ENCODE measurements at regions of chr12 and their contacts with region 1.

Region 1: GRCh38 chr12:6778574-6779550 is 6.5 kb downstream of the LAG3 start:
- DNase-seq: peak; percentile 94
- H3K4me3 ChIP-seq: peak overlapping the region; percentile 65
- H3K27ac ChIP-seq: no peak overlapping the region
- H3K4me1 ChIP-seq: peaks cover 43% of the 10 kb centered on the region
- CTCF ChIP-seq: peak; percentile 98

Region 2: DNA sequence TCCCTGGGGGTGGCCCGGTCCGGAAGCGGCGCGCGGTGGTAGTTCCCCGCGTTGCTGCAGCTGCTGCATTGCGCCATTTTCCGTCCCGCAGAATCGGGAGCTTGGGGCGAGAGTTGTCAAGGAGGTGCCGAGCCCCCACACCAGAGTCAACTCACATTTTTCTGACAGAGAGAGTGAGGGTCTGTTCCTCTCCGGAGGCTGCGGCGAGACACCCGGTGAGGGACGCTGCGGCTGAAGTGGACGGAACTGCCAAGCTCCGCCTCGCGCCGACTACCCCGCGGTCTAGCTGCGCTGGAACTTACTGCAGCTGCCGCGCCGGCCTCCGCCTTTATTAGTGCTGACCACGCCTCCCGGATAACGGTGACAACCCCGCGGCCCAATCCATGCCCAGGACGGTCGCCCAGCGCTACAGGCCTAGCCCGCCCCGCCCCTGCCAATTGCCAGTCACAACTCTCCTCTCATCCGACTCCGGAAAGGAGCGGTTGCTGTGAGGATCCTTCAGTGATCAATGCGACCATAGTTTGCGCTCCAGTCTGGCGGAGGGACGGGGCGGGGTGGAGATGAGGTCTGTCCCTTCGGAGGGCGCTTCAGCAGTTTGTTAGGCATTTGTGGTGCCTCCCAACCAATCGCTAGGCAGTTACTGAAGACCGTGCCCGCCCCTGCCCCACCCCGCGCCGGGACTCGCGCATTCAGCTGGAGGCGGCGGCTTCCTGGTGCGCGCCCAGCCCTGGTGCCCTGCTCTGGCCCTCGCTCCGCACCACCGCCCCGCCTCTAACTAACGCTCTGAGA is 308.3 kb before region 1 on chr12 and contains the start of gene VAMP1:
- CTCF ChIA-PET with region 1: no interaction called
- POLR2A ChIA-PET with region 1: no interaction called
- intact Hi-C with region 1: no loop called
- DNase-seq: peak; percentile 96
- H3K4me3 ChIP-seq: peak within 1 kb of the TSS; percentile 86
- H3K27ac ChIP-seq: peak within 1 kb of the TSS; percentile 62
- H3K4me1 ChIP-seq: peaks cover 32% of the 10 kb centered on the region
- CTCF ChIP-seq: no peak; the same call in 1 of the 2 replicates
- total RNA-seq, gene VAMP1: 82.7 and 86.0 TPM in 2 replicates

Region 3: GRCh38 chr12:6554168-6555017 is 224.5 kb before region 1 on chr12:
- CTCF ChIA-PET with region 1: no interaction called
- POLR2A ChIA-PET with region 1: no interaction called
- intact Hi-C with region 1: loop called (anchors 2 kb)
- DNase-seq: peak; percentile 91
- H3K4me3 ChIP-seq: peak overlapping the region; percentile 92
- H3K27ac ChIP-seq: peak overlapping the region; percentile 49
- H3K4me1 ChIP-seq: peaks cover 40% of the 10 kb centered on the region
- CTCF ChIP-seq: peak; percentile 81

Region 4: DNA sequence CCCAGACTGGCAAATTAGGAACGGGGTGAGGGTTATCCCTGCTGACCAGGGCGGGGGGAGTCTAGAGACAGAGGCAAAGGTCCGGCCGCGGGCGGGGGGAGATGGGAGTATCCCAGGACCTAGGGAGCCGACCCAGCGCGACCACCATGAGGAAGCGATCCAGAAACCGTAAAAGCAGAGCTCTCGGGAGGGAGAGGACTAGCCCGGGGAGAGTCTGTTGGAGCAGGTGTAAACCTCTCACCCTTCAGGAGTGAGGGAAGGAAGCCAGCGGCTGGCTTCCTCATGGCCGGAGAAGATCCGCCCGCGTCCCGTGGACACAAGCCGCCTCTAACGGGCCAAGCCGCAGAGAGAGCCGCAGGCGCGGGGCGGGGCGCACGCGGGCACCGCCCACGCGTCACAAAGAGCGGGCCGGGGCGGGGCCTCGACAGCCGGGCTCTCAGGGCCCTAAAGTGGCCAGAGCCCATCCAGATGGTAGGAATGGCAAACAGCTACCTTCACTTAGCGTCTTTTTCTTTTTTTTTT is 131.7 kb before region 1 on chr12 and contains the start of gene ACRBP:
- CTCF ChIA-PET with region 1: no interaction called
- POLR2A ChIA-PET with region 1: no interaction called
- intact Hi-C with region 1: no loop called
- DNase-seq: peak; percentile 80
- H3K4me3 ChIP-seq: peak within 1 kb of the TSS; percentile 72
- H3K27ac ChIP-seq: no peak within 1 kb of the TSS
- H3K4me1 ChIP-seq: peaks cover 36% of the 10 kb centered on the region
- CTCF ChIP-seq: no peak
- total RNA-seq, gene ACRBP: 3.6 and 4.4 TPM in 2 replicates

Region 5: DNA sequence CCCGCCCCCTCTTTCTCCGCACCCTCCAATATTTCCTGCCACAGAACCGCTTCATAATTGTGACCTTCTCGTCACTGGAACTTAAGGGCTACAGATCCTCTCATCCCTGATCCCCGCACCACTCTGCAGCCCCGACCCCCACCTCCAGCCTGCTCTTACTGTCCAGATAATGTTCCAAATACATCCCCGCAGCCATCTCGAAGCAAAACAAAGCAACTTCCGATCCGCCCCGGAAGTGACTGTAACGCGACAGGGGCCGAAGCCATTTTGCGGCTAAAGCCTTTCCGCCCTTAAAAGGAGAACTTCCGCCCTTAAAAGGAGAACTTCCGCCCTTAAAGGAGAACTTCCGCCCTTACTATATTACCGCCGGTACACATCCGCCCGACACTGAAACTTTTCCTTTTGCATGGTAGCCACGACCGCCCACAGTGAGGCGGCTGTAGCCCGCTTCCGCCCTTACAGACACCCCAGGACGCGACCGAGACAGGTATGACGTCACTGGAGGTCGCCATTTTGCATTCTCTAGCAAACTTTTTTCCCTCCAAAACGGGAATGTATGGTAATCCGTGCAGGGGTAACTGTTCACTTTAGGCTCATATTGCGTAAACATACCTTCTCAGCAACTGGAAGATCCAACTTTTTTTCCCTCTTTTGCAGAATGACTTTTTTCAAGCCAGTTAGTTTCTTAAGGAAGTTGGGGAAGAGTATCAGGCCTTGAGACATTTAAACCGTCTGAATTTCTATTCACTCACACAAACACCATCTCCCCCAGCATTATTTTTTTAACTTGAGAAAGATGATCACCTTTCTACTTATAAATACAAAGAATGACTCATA is 115.7 kb before region 1 on chr12 and contains the start of gene ING4:
- CTCF ChIA-PET with region 1: no interaction called
- POLR2A ChIA-PET with region 1: no interaction called
- intact Hi-C with region 1: loop called (anchors 1 kb)
- DNase-seq: peak; percentile 100
- H3K4me3 ChIP-seq: peak within 1 kb of the TSS; percentile 79
- H3K27ac ChIP-seq: peak within 1 kb of the TSS; percentile 67
- H3K4me1 ChIP-seq: peaks cover 19% of the 10 kb centered on the region
- CTCF ChIP-seq: no peak
- total RNA-seq, gene ING4: 27.1 and 38.1 TPM in 2 replicates

Region 6: GRCh38 chr12:6752921-6753771 is 25.7 kb before region 1 on chr12 and contains the start of gene MLF2:
- CTCF ChIA-PET with region 1: interaction called, 6 read pairs
- POLR2A ChIA-PET with region 1: interaction called, 4 read pairs
- intact Hi-C with region 1: loop called (anchors 1 kb)
- DNase-seq: peak; percentile 97
- H3K4me3 ChIP-seq: peak within 1 kb of the TSS; percentile 89
- H3K27ac ChIP-seq: peak within 1 kb of the TSS; percentile 73
- H3K4me1 ChIP-seq: peaks cover 17% of the 10 kb centered on the region
- CTCF ChIP-seq: no peak
- total RNA-seq, gene MLF2: 87.3 and 96.2 TPM in 2 replicates

Measured in OCI-LY7 (cell line).